GM13977 (cell line): ENCODE measurements at regions of chr13 and their contacts with region 1.

Region 1: DNA sequence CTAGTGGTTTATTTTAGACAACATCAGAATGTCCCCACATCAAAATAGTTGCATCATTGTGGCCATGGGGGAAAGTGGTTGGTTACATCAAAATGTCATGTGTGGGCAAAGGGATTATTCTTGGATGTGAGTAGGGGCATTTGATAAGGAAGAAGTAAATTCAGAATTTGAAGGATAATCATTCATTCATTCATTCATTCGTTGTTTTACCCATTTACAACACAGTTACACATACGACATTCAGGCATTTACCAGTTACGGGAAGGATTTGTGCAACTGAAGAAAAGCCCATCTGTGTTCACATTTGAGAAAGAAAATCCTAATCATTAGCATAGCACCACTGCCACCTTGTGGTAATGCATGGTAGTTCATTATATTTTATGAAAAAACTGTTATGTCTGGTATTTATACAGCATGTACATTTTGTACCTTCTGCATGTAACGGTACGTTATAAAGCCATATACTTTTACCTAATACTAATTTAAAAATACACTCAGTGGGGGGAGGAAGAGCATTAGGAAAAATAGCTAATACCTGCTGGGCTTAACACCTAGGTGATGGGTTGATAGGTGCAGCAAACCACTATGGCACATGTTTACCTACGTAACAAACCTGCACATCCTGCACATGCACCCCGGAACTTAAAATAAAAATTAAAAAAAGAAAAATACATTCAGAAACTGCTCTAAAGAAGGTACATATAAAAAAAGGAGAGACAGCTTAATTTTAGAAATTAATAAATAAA is 62.1 kb downstream of the DGKH start:
- DNase-seq: peak; percentile 44
- CTCF ChIP-seq: peak; percentile 44

Region 2: GRCh38 chr13:41386211-41386610 is 724.4 kb before region 1 on chr13:
- in situ Hi-C with region 1: no loop called
- DNase-seq: no peak
- CTCF ChIP-seq: no peak

Region 3: GRCh38 chr13:41456768-41457588 is 653.6 kb before region 1 on chr13 and contains the start of gene RGCC:
- in situ Hi-C with region 1: no loop called
- DNase-seq: peak; percentile 91
- CTCF ChIP-seq: no peak

Region 4: DNA sequence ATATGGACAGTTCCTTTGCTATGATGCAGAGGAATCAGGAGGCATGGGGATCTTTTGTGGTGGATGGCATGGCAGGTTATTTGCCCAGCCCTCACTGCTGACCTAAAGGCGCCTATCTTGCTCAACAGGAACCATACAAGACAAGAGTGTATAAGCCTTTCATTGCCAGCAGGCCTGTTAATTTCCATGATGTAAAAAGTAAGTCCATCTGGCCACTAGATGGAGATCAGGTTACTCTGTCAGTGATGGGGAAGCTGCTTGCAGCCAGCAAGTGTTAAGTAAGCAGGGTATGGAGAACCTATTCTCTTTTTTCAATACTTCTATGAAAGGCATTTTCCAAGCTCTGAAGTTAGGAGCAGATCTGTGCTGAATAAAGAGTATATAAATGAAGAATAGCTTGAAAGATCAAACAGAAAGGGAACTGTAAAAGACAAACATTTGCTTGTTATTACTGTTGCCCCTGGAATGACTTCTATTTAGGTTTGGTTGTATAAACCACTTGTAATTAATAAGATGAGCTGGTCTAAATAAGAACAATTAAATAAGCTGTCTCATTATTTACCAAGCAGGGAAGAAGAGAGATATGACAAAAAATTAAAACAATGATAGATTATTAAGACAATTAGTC is 442.3 kb before region 1 on chr13:
- in situ Hi-C with region 1: loop called (anchors 5 kb)
- DNase-seq: peak; percentile 44
- CTCF ChIP-seq: peak; percentile 79

Region 5: DNA sequence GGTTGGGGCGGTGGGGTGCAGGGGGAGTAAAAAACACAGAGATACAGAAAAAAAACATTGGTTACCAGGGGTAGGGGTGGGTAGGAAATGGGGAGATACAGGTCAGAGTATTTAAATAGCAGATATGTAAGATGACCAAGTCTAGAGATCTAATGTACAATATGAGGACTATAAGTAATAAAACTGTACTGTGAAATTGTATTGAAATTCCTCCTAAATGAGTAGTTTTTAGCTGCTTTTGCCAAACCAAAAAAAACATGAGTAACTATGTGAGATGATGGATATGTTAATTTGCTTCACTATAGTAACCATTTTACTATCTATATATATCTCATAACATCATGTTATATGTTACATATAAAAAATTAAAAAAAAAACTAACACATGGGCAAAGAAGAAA is 179.2 kb before region 1 on chr13:
- in situ Hi-C with region 1: no loop called
- DNase-seq: no peak
- CTCF ChIP-seq: no peak